SK-N-SH (cell line): ENCODE measurements at regions of chr2 and their contacts with region 1.

Region 1: GRCh38 chr2:231411831-231412617 is 16.5 kb downstream of the B3GNT7 start:
- DNase-seq: peak; percentile 97
- H3K4me3 ChIP-seq: peak overlapping the region; percentile 64 to 70
- H3K27ac ChIP-seq: peak overlapping the region; percentile 16 to 40; a peak in 2 of 4 replicates
- H3K4me1 ChIP-seq: peaks cover 3% of the 10 kb centered on the region in 2 experiments; a peak in 1 of 4 replicates
- H3K27me3 ChIP-seq: no peaks in the 10 kb centered on the region
- CTCF ChIP-seq: peak; percentile 94
- EP300 ChIP-seq: no peak
- RAD21 ChIP-seq: peak; percentile 95

Region 2: GRCh38 chr2:230991598-230991997 is 420.4 kb before region 1 on chr2:
- CTCF ChIA-PET with region 1: no interaction called
- POLR2A ChIA-PET with region 1: no interaction called
- DNase-seq: no peak
- H3K4me3 ChIP-seq: no peak overlapping the region
- H3K27ac ChIP-seq: no peak overlapping the region
- H3K4me1 ChIP-seq: peaks cover 0 to 4% of the 10 kb centered on the region in 2 experiments; a peak in 1 of 4 replicates
- H3K27me3 ChIP-seq: peaks cover 20% of the 10 kb centered on the region
- CTCF ChIP-seq: no peak
- EP300 ChIP-seq: no peak
- RAD21 ChIP-seq: no peak

Region 3: DNA sequence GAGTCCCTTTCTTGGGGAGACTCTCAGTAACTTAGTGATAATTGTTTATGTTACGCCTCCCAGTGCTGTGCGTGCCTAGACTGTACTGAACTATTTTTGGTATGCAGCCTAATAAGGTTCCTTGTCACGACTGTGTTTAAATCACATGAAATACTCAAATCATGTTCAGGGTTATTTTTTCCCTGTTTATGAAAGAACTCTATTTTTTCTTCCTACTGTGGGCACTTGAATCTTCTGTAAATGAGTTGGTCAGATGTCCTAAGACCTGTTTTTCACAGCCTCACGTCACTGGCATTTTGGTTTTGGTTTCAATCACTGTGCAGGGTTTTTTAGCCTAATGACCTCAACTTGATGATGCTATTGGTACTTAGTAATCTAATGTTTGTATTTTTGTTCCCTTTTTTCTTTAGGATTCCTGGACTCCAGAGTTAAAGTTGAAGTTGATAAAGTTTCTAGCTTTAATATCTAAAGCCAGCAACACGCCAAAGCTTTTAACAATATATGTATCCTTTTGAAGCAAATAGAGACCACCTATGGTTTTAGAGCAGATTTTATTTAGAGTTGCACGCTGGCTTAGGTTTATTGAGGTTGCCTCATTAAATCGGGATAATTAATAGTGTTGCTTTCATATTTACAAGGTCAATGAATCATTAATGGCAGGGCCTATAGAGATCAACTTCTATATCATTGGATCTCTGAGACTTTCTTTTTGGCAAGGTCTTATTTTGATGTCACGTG is 189.5 kb before region 1 on chr2:
- CTCF ChIA-PET with region 1: interaction called, 250 read pairs
- POLR2A ChIA-PET with region 1: no interaction called
- DNase-seq: no peak
- H3K4me3 ChIP-seq: no peak overlapping the region
- H3K27ac ChIP-seq: no peak overlapping the region
- H3K4me1 ChIP-seq: no peaks in the 10 kb centered on the region
- H3K27me3 ChIP-seq: no peaks in the 10 kb centered on the region
- CTCF ChIP-seq: no peak
- EP300 ChIP-seq: no peak
- RAD21 ChIP-seq: no peak

Region 4: DNA sequence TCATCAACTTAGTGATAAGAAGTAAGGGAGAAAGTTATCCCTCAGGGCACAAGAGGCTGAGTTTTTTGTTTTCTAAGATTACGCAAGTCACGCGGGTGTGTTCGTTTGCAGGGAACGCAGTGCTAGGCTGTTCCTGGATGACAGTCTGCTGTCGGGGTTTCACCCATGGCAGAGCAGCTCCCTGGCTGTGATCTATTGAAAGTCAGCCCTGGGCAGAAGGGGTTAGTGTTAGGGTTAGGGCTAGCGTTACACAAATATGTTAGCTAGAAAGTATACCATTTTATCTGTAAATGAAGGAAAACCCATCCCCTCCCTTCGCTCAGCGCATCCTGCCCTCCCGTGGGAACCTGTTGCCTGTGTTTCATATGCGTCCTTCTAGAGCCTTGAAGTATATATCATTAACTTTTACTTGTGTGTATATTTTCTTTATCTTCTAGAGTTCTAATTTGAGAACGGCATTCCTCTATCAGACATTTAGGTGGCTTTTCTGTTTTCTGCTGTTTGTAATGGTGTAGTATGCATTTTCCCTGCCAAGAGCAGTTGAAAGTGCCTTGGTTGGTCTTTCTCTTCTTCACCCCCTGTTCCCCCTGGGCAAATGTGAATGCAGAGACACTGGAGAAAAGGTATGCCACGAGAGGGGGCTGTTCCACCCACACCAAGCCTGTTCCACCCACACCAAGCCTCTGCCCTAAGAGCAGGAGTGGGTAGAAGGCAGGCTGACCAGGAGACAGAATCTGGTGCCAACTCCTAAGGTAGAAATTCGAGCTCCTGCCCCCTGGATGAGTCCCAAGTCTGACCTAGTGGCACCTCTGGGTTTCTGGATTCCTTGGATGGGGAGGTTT is 166.6 kb before region 1 on chr2:
- CTCF ChIA-PET with region 1: interaction called, 25 read pairs
- POLR2A ChIA-PET with region 1: no interaction called
- DNase-seq: no peak
- H3K4me3 ChIP-seq: no peak overlapping the region
- H3K27ac ChIP-seq: no peak overlapping the region
- H3K4me1 ChIP-seq: no peaks in the 10 kb centered on the region
- H3K27me3 ChIP-seq: no peaks in the 10 kb centered on the region
- CTCF ChIP-seq: peak; percentile 20; the same call in 1 of the 2 replicates
- EP300 ChIP-seq: no peak
- RAD21 ChIP-seq: no peak

Region 5: GRCh38 chr2:231297108-231297908 is 114.7 kb before region 1 on chr2:
- CTCF ChIA-PET with region 1: interaction called, 302 read pairs
- POLR2A ChIA-PET with region 1: interaction called, 3 read pairs
- DNase-seq: peak; percentile 87
- H3K4me3 ChIP-seq: no peak overlapping the region; a peak in 1 of 4 replicates
- H3K27ac ChIP-seq: no peak overlapping the region; a peak in 1 of 4 replicates
- H3K4me1 ChIP-seq: no peaks in the 10 kb centered on the region; a peak in 1 of 4 replicates
- H3K27me3 ChIP-seq: no peaks in the 10 kb centered on the region
- CTCF ChIP-seq: peak; percentile 73
- EP300 ChIP-seq: no peak
- RAD21 ChIP-seq: peak; percentile 80

Region 6: GRCh38 chr2:231425811-231426728 is 14.0 kb after region 1 on chr2:
- CTCF ChIA-PET with region 1: interaction called, 27 read pairs
- POLR2A ChIA-PET with region 1: no interaction called
- DNase-seq: no peak
- H3K4me3 ChIP-seq: no peak overlapping the region
- H3K27ac ChIP-seq: no peak overlapping the region
- H3K4me1 ChIP-seq: no peaks in the 10 kb centered on the region
- H3K27me3 ChIP-seq: no peaks in the 10 kb centered on the region
- CTCF ChIP-seq: no peak
- EP300 ChIP-seq: no peak
- RAD21 ChIP-seq: no peak

Region 7: DNA sequence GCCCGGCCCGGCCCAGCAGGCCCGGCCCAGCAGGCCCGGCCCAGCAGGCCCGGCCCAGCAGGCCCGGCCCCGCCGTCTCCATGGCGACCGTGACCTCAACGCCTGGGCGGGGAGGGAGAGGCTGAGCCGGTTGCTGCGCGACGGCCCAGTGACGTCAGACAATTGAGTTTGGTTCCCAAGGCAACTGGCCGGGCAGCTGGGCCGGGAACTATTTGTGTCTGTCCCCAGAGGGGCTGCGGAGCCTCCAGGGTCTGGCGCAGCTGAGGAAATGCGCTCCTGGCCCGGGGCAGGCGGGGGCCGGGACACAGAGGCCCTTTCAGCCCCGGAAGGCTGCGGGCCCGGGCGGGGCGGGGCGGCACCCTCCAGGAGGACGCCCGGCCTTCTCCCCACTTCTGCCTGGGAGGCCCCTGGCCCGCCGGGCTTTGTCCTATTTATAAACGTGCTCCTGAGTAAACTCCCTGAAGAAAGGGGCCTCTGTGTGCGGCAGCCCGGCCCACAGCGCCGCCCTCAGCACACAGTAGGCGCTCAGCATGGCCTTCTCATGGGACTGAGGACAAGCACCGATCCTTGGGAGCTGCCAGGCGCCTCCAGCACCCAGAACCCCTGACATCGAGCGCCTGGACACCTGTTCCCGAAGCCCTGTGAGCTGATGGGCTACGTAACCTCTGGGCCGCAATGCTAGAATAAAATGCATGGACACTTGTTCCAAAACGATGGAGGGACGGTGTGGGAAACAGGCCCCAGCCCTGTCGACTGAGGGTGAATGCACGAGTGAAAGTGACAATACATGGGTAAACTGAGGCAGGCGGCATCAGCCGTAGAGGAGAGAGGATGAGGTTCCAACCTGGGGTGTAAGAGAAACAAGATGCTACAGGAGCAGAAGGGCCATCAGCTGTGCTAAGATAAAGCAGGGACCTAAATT is 192.9 kb after region 1 on chr2:
- CTCF ChIA-PET with region 1: no interaction called
- POLR2A ChIA-PET with region 1: no interaction called
- DNase-seq: peak; percentile 99
- H3K4me3 ChIP-seq: peak overlapping the region; percentile 51 to 66
- H3K27ac ChIP-seq: peak overlapping the region; percentile 96
- H3K4me1 ChIP-seq: peaks cover 10 to 28% of the 10 kb centered on the region in 2 experiments
- H3K27me3 ChIP-seq: no peaks in the 10 kb centered on the region
- CTCF ChIP-seq: no peak
- EP300 ChIP-seq: peak in 1 of 2 experiments; percentile 19; a peak in 1 of 4 replicates
- RAD21 ChIP-seq: no peak

Region 8: DNA sequence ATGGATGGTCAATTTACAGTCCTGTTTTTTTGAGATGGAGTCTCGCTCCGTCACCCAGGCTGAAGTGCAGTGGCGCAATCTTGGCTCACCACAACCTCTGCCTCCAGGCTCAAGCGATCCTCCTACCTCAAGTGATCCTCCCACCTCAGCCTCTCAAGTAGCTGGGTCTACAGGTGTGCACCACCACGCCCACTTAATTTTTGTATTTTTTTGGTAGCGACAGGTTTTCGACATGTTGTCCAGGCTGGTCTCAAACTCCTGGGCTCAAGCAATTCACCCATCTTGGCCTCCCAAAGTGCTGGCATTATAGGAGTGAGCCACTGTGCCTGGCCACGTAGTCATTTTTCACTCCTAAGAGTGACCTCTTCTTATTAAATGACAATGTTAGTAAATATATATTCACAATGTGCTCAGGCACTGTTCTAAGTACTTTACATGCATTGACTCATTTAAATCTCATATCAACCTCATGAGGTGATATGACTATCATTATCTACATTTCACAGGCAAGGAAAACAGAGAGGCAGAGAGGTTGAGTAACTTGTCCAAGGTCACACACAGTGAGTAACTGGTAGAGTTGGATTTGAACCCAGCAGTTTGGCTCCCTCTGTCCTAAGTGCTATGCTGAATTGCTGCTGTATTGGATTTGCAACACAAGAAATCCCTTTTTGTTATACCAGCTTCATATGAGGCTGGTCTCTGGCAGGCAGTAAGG is 543.9 kb after region 1 on chr2:
- CTCF ChIA-PET with region 1: no interaction called
- POLR2A ChIA-PET with region 1: no interaction called
- DNase-seq: no peak
- H3K4me3 ChIP-seq: no peak overlapping the region
- H3K27ac ChIP-seq: no peak overlapping the region
- H3K4me1 ChIP-seq: peaks cover 0 to 3% of the 10 kb centered on the region in 2 experiments; a peak in 1 of 4 replicates
- H3K27me3 ChIP-seq: no peaks in the 10 kb centered on the region
- CTCF ChIP-seq: no peak
- EP300 ChIP-seq: no peak
- RAD21 ChIP-seq: no peak